Mammary epithelial cell (primary cell): ENCODE measurements at regions of chr7 and their contacts with region 1.

Region 1: GRCh38 chr7:6175645-6176044 is 96.8 kb downstream of the CYTH3 start:
- DNase-seq: peak; percentile 60
- H3K4me3 ChIP-seq: no peak overlapping the region
- H3K27ac ChIP-seq: no peak overlapping the region
- H3K4me1 ChIP-seq: peaks cover 25% of the 10 kb centered on the region
- H3K27me3 ChIP-seq: no peaks in the 10 kb centered on the region
- CTCF ChIP-seq: no peak

Region 2: DNA sequence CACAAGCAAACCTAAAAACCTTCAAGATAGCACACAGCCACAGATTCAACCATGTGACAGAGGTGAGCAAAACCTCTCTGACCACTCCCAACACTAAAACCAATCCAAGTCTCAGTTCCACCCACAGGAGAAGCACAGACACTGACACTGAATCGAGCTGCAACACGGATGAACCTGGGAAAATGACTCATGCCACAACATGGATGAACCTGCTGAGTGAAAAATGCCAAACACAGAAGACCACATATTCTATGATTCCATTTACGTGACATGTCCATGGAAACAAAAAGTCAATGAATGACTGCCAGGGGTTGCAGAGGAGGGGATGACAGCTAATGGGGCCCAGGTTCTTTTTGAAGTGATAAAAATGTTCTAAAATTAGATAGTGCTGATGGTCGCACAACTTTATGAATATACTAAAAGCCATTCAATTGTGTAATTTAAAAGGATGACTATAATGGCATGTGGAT is 74.8 kb after region 1 on chr7:
- CTCF ChIA-PET with region 1: no interaction called
- dilution Hi-C with region 1: no loop called
- in situ Hi-C with region 1: no loop called
- intact Hi-C with region 1: loop called (anchors 5 kb)
- DNase-seq: peak; percentile 95
- H3K4me3 ChIP-seq: no peak overlapping the region
- H3K27ac ChIP-seq: peak overlapping the region; percentile 98
- H3K4me1 ChIP-seq: peaks cover 49% of the 10 kb centered on the region
- H3K27me3 ChIP-seq: no peaks in the 10 kb centered on the region
- CTCF ChIP-seq: no peak

Region 3: GRCh38 chr7:6283391-6284390 is 108.0 kb after region 1 on chr7:
- CTCF ChIA-PET with region 1: interaction called, 12 read pairs
- dilution Hi-C with region 1: no loop called
- in situ Hi-C with region 1: no loop called
- intact Hi-C with region 1: no loop called
- DNase-seq: peak; percentile 52
- H3K4me3 ChIP-seq: no peak overlapping the region
- H3K27ac ChIP-seq: peak overlapping the region; percentile 98
- H3K4me1 ChIP-seq: peaks cover 25% of the 10 kb centered on the region
- H3K27me3 ChIP-seq: no peaks in the 10 kb centered on the region
- CTCF ChIP-seq: no peak